ENCODE measurements at regions of chr9 and their contacts with region 1.

Region 1: GRCh38 chr9:29285818-29286217 is 1712.5 kb upstream of the C9orf72 start:
- DNase-seq: no peak
- ATAC-seq: no peak
- H3K4me3 ChIP-seq: no peak overlapping the region
- H3K4me3 Mint-ChIP-seq: no peak overlapping the region
- H3K27ac ChIP-seq: no peak overlapping the region
- H3K27ac Mint-ChIP-seq: no peak overlapping the region
- H3K4me1 ChIP-seq: no peaks in the 10 kb centered on the region
- H3K4me1 Mint-ChIP-seq: no peaks in the 10 kb centered on the region
- H3K27me3 ChIP-seq: no peaks in the 10 kb centered on the region
- H3K27me3 Mint-ChIP-seq: no peaks in the 10 kb centered on the region
- CTCF ChIP-seq: no peak

Region 2: GRCh38 chr9:30349526-30350513 is 1064.0 kb after region 1 on chr9:
- CTCF ChIA-PET with region 1: no interaction called
- POLR2A ChIA-PET with region 1: no interaction called
- intact Hi-C with region 1: loop called in 1 of 2 experiments (anchors 5 kb)
- DNase-seq: no peak
- ATAC-seq: no peak
- H3K4me3 ChIP-seq: no peak overlapping the region
- H3K4me3 Mint-ChIP-seq: no peak overlapping the region
- H3K27ac ChIP-seq: no peak overlapping the region
- H3K27ac Mint-ChIP-seq: no peak overlapping the region
- H3K4me1 ChIP-seq: no peaks in the 10 kb centered on the region
- H3K4me1 Mint-ChIP-seq: no peaks in the 10 kb centered on the region
- H3K27me3 ChIP-seq: no peaks in the 10 kb centered on the region
- H3K27me3 Mint-ChIP-seq: no peaks in the 10 kb centered on the region
- CTCF ChIP-seq: no peak